ENCODE measurements at regions of chr1 and their contacts with region 1.

Region 1: GRCh38 chr1:70990469-70991253 is 57.0 kb downstream of the PTGER3 start:
- DNase-seq: no peak
- H3K4me3 ChIP-seq: no peak overlapping the region
- H3K27ac ChIP-seq: no peak overlapping the region
- H3K4me1 ChIP-seq: peaks cover 41% of the 10 kb centered on the region
- CTCF ChIP-seq: no peak

Region 2: GRCh38 chr1:70978623-70979022 is 12.0 kb before region 1 on chr1:
- CTCF ChIA-PET with region 1: no interaction called
- POLR2A ChIA-PET with region 1: interaction called, 30 read pairs
- intact Hi-C with region 1: no loop called
- DNase-seq: no peak
- H3K4me3 ChIP-seq: no peak overlapping the region
- H3K27ac ChIP-seq: no peak overlapping the region
- H3K4me1 ChIP-seq: no peaks in the 10 kb centered on the region
- CTCF ChIP-seq: no peak

Region 3: DNA sequence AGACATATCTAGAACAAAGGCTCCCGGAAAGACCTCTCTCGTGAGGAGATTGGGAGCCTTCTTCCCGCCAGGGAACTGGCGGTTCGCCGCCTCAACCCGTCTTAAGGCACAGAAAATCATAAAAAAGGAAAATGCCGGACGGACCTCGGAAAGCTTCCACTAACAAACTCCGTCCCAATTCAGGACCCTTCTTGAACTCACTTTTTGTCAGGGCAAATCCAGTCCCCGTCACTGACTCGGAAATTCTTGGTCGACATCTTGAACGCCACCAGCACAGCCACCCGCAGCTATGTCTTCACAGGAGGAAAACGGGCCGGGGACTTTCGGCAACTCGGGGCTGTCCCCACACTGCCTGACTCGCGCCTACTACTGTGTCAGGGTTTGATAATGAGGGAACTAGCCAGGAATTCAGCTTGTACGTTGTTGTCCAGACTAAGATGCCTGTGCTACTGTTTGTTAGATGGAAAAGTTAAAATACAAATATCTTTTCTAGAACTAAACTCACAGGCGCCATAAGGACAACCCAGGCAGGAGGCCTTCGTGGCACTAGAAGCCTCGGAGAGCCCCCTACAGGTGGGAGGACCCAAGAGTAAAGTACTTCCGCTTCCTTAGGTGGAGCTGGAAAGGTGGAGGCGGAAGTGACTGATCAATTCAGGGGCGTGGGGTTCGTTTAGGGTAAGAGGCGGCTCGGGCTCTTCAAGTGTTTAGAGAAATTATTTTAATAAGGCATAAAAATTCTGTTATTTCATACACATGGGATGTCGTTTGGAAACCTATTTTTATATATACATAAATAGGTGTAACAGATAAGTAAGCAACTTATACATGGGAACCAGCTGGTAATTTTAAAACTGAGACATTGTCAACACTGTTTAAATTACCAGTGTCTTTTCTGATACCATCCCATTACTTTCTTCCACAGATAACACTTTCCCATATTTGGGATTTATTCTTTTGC is 90.4 kb after region 1 on chr1 and contains the start of gene ZRANB2:
- CTCF ChIA-PET with region 1: no interaction called
- POLR2A ChIA-PET with region 1: interaction called, 5 read pairs
- intact Hi-C with region 1: loop called (anchors 2 kb)
- DNase-seq: peak; percentile 98
- H3K4me3 ChIP-seq: peak within 1 kb of the TSS; percentile 92
- H3K27ac ChIP-seq: peak within 1 kb of the TSS; percentile 62
- H3K4me1 ChIP-seq: peaks cover 19% of the 10 kb centered on the region
- CTCF ChIP-seq: peak; percentile 82
- total RNA-seq, gene ZRANB2: 75.9 and 82.1 TPM in 2 replicates

Region 4: DNA sequence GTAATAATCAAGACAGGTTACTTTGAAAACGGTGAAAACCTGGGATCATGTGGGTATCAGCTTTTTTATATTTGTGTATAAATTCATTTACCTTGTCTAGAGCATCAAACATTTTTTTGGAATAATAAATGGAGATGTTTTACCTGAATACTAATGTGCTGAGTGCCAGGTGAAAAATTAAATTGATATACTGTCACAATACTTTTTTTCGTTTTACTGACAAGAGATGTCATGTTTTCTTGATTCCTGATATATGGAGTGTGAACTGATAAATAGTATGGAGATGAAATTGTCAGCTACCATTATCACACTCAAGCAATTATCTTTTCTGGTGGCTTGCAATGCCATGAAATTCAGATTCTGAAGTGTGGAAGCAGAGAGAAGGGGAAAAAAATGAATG is 137.4 kb after region 1 on chr1:
- CTCF ChIA-PET with region 1: no interaction called
- POLR2A ChIA-PET with region 1: no interaction called
- intact Hi-C with region 1: no loop called
- DNase-seq: no peak
- H3K4me3 ChIP-seq: no peak overlapping the region
- H3K27ac ChIP-seq: no peak overlapping the region
- H3K4me1 ChIP-seq: no peaks in the 10 kb centered on the region
- CTCF ChIP-seq: no peak